GM10248 (cell line): ENCODE measurements at regions of chr1 and their contacts with region 1.

Region 1: GRCh38 chr1:226711976-226712741 is 26.9 kb downstream of the ITPKB start:
- DNase-seq: peak; percentile 69
- CTCF ChIP-seq: no peak

Region 2: DNA sequence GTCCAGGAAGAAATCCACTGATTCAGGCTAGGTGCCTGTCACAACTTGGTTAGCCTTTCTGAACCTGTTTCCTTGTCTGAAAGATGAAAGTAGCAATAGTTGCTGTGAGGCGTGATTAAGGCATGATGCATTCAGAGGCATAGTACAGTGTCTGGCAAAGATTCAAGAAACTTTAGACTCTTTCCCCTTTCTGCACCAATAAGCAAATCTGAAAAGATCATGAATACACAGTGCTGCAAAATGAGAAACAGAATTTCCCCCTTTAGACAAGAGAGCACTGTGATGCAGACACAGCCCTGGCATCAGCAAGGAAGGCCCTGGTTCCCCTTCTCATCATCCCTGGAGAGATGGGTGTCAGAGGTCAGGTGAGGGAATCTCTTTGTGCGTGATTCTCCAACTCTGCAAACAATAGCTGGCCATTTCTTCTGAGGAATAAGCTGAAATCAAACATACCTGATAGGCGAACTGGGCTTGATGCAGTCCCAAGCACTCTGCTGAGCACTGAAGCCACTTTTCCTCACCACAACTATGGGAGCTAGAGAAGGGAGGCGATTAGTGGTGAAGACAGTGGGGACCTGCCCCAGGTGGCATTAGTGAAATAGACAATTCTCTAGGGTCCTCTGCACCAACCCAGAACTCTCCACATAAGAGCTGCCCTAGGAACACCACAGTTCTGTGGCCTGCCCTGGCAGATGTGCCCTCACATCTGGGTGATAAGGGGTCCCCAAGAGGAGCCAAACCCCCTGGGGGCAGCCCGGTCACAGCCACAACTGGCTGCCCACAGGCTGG is 14.8 kb before region 1 on chr1:
- CTCF ChIA-PET with region 1: interaction called, 10 read pairs
- POLR2A ChIA-PET with region 1: no interaction called
- DNase-seq: peak; percentile 55
- CTCF ChIP-seq: no peak

Region 3: GRCh38 chr1:226738995-226739695 is 27.0 kb after region 1 on chr1 and contains the start of gene ITPKB:
- CTCF ChIA-PET with region 1: interaction called, 11 read pairs
- POLR2A ChIA-PET with region 1: no interaction called
- DNase-seq: peak; percentile 67
- CTCF ChIP-seq: no peak